Aorta (tissue), 5 donors: ENCODE measurements at regions of chr1 and their contacts with region 1.

Region 1: GRCh38 chr1:23916209-23917131 is 3.3 kb upstream of the CNR2 start:
- DNase-seq: peak; percentile 78 to 79
- ATAC-seq: peak; percentile 71
- H3K4me3 ChIP-seq: no peak overlapping the region
- H3K27ac ChIP-seq: no peak overlapping the region
- H3K4me1 ChIP-seq: no peaks in the 10 kb centered on the region
- H3K27me3 ChIP-seq: no peaks in the 10 kb centered on the region

Region 2: DNA sequence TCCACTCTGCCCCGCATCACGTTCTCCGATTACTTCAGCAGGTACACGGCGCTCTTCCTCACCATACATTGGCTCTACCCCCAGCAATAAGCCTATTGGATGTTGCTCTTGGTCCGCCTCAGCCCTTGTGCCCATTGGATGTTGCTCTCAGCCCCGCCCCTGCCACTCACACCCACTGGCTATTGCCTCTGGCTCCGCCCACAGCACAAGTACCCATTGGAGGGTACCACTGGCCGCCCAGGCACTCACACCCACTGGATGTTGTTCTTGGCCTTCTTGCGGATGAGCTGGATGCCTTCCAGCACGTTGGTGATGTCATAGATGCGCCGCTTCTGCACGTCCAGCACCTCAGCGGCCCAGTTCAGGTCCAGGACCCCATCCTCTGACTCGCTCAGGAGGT is 394.9 kb before region 1 on chr1:
- intact Hi-C with region 1: no loop called
- DNase-seq: no peak
- ATAC-seq: peak; percentile 22
- H3K4me3 ChIP-seq: no peak overlapping the region
- H3K27ac ChIP-seq: no peak overlapping the region
- H3K4me1 ChIP-seq: no peaks in the 10 kb centered on the region
- H3K27me3 ChIP-seq: no peaks in the 10 kb centered on the region

Region 3: DNA sequence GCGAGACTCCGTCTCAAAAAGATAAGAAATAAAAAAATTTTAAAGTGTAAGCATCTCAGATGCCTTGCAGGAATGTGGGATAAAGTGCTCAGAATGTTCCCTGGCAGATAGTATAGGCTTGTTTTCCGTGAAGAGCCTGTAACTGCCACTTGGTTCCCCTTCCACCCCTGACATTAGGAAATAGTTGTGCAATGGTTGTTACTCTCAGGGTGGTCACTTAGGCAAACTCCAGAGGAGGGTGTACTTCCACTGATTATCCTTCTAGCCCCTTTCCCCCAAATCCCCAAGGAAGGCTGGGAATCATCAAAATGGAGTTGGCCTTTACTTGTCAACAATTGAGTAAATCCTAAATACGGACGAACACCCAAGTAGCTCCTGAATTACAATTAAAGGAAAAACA is 214.5 kb before region 1 on chr1:
- intact Hi-C with region 1: no loop called
- DNase-seq: no peak
- ATAC-seq: no peak
- H3K4me3 ChIP-seq: no peak overlapping the region
- H3K27ac ChIP-seq: no peak overlapping the region
- H3K4me1 ChIP-seq: no peaks in the 10 kb centered on the region
- H3K27me3 ChIP-seq: no peaks in the 10 kb centered on the region

Region 4: DNA sequence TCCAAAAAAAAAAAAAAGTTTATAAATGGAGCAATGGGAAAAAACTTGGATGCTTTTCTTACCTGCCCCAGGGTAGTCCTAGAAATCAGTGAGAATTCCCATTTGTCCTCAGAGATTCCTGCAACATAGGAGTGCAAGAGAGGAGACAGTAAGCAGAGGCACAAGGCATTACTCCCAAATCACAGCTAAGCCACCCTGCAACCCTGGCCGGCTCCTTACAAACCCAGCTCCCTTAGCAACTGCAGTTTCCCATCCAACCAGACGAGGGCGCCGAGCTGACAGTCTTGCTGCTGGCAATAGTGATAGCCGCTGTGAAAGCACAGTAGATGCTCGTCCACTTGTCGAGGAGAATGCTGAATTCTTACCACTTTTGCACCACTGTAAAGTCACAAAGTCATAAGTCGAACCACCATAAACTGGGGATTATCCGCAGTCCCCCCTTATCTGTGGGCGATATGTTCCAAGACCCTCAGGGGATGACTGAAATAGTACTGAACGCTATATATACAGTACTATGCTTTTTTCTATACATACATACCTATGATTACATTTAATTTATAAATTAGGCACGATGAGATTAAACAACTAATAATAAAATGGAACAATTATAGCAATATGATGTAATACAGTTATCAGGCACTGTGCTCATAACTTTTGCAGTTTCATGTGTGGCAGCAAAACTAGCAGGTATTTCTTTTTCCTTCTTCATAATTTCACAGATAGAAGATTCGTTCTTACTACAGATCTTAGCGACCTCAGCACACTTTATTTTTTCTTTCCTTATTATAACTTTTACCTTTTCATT is 144.2 kb before region 1 on chr1:
- intact Hi-C with region 1: loop called (anchors 1 to 2 kb)
- DNase-seq: peak; percentile 90 to 96
- ATAC-seq: peak; percentile 88
- H3K4me3 ChIP-seq: no peak overlapping the region
- H3K27ac ChIP-seq: no peak overlapping the region
- H3K4me1 ChIP-seq: no peaks in the 10 kb centered on the region
- H3K27me3 ChIP-seq: no peaks in the 10 kb centered on the region

Region 5: DNA sequence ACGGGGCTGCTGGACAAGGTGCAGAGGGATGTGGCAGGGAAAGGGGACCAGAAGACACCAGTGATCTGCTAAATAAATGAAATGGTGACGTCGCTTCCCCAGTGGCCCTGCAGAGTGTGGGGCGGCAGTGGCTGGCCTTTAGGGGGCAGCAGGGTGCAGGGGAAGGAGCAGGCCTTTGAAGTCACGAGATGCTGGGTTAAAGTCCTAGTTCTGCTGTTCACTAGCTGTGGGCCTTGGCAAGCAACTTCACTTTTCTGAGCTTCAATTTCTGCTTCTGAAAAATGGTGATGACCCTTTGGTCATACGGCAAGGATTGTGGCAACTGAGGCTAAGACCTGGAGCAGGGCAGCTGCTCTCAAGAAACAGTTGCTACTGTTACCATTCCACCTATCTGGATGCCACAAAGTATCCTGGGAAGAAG is 106.7 kb before region 1 on chr1:
- intact Hi-C with region 1: loop called in 1 of 2 experiments (anchors 10 kb)
- DNase-seq: peak; percentile 88 to 90
- ATAC-seq: peak; percentile 72
- H3K4me3 ChIP-seq: no peak overlapping the region
- H3K27ac ChIP-seq: no peak overlapping the region
- H3K4me1 ChIP-seq: no peaks in the 10 kb centered on the region
- H3K27me3 ChIP-seq: no peaks in the 10 kb centered on the region

Region 6: DNA sequence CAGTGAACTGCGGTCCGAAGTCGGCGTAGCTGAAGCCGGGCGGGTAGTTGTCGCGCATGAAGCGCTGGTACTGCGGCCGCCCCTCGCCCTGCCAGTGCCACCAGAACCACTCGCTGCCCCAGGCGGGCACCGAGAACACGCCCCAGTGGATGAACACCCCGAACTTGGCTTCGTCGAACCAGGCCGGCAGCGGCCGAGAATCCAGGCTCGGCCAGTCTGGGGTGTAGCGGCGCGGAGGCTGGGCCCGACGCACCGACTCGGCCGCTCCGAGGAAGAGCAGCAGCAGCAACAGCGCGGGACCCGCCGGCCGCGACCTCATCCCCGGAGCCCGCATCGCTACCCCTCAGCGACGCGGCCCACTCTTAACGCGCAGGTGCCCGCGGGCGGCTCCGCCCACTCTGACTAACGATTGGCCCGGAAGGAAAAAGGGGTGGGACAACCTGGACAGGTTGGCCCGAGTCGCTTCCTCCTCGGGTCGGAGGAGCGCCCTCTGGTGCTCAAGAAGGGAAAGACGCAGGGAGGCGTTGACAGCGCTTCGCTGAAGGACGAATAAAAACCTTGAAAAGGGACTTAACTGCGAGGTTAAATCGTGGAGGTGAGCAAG is 48.4 kb before region 1 on chr1 and contains the start of gene FUCA1:
- intact Hi-C with region 1: no loop called
- DNase-seq: peak; percentile 95 to 96
- ATAC-seq: peak; percentile 98
- H3K4me3 ChIP-seq: peak within 1 kb of the TSS; percentile 24 to 61
- H3K27ac ChIP-seq: peak within 1 kb of the TSS in 1 of 2 donors; percentile 68
- H3K4me1 ChIP-seq: peaks cover 0 to 4% of the 10 kb centered on the region in 2 donors
- H3K27me3 ChIP-seq: no peaks in the 10 kb centered on the region
- total RNA-seq, gene FUCA1: 26.0 to 35.4 TPM